CD8-positive, alpha-beta T cell (primary cell): ENCODE measurements at regions of chr12 and their contacts with region 1.

Region 1: DNA sequence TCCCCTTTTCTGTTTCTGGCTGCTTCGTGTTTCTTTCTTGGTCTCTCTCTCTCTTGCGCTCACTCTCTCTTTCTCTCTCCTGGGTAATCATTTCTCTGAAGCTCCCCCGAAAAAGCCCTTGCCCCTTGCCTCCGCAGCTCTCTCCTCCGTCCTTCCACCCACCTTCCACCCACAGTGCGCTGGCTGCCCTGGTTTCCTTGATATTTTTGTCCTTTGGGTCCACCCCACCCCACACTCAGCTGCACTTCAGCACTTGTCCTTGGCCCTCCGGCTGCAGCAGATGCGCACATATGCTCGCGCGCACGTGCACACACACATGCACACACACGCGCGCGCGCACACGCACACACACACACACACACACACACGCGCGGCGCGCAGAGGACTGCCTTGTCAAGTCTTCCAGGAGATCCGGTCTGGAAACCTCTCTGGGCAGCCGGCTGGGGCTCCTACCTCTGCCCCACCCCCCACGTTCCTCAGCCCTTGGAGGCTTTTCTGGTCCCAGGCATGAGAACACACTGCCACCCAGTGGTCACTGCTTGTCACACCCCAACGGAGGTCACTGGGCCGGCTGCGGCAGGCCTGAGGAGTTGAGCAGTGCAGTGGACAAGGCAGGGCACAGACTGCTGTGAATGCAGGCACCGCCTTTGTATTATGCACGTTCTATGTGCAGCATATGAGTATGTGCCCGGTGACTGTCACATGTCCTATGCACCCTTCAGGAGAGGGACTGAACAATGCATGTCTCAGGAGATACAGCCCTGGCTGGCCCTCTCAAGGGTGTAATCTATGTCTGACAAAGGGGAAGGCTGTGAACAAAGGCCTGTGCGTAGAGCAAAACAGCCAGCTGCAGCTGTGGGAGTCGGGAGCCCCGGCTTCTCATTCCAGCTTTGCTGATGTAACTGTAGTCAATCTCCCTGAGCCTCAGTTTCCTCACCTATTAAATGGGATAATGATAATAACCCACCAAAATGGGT is 6.5 kb downstream of the LAG3 start:
- DNase-seq: peak; percentile 80 to 92 (median 88)
- ATAC-seq: peak; percentile 72
- H3K4me3 ChIP-seq: peak overlapping the region; percentile 40 to 64
- H3K4me3 Mint-ChIP-seq: peak overlapping the region; percentile 85
- H3K27ac ChIP-seq: peak overlapping the region in 1 of 2 experiments; percentile 8
- H3K27ac Mint-ChIP-seq: peak overlapping the region; percentile 71
- H3K4me1 ChIP-seq: peaks cover 20% of the 10 kb centered on the region
- H3K4me1 Mint-ChIP-seq: peaks cover 27% of the 10 kb centered on the region
- H3K27me3 ChIP-seq: no peaks in the 10 kb centered on the region
- H3K27me3 Mint-ChIP-seq: peaks cover 12% of the 10 kb centered on the region
- CTCF ChIP-seq: peak; percentile 94

Region 2: GRCh38 chr12:6295094-6295811 is 483.6 kb before region 1 on chr12:
- CTCF ChIA-PET with region 1: no interaction called
- POLR2A ChIA-PET with region 1: no interaction called
- intact Hi-C with region 1: no loop called
- DNase-seq: no peak
- ATAC-seq: no peak
- H3K4me3 ChIP-seq: no peak overlapping the region
- H3K4me3 Mint-ChIP-seq: no peak overlapping the region
- H3K27ac ChIP-seq: no peak overlapping the region
- H3K27ac Mint-ChIP-seq: no peak overlapping the region
- H3K4me1 ChIP-seq: no peaks in the 10 kb centered on the region
- H3K4me1 Mint-ChIP-seq: no peaks in the 10 kb centered on the region
- H3K27me3 ChIP-seq: no peaks in the 10 kb centered on the region
- H3K27me3 Mint-ChIP-seq: peaks cover 16% of the 10 kb centered on the region
- CTCF ChIP-seq: no peak

Region 3: GRCh38 chr12:6554168-6555017 is 224.5 kb before region 1 on chr12:
- CTCF ChIA-PET with region 1: interaction called, 4 read pairs
- POLR2A ChIA-PET with region 1: no interaction called
- intact Hi-C with region 1: loop called in 1 of 2 experiments (anchors 1 kb)
- DNase-seq: peak; percentile 55 to 81 (median 71)
- ATAC-seq: peak; percentile 61
- H3K4me3 ChIP-seq: peak overlapping the region; percentile 70 to 96
- H3K4me3 Mint-ChIP-seq: peak overlapping the region; percentile 87
- H3K27ac ChIP-seq: no peak overlapping the region
- H3K27ac Mint-ChIP-seq: peak overlapping the region; percentile 58
- H3K4me1 ChIP-seq: peaks cover 35% of the 10 kb centered on the region
- H3K4me1 Mint-ChIP-seq: peaks cover 49% of the 10 kb centered on the region
- H3K27me3 ChIP-seq: no peaks in the 10 kb centered on the region
- H3K27me3 Mint-ChIP-seq: no peaks in the 10 kb centered on the region
- CTCF ChIP-seq: peak; percentile 50

Region 4: GRCh38 chr12:6613776-6614512 is 164.9 kb before region 1 on chr12:
- CTCF ChIA-PET with region 1: interaction called, 4 read pairs
- POLR2A ChIA-PET with region 1: no interaction called
- intact Hi-C with region 1: loop called (anchors 1 to 2 kb)
- DNase-seq: peak in 7 of 9 experiments; percentile 36 to 90 (median 67)
- ATAC-seq: peak; percentile 43
- H3K4me3 ChIP-seq: no peak overlapping the region
- H3K4me3 Mint-ChIP-seq: no peak overlapping the region
- H3K27ac ChIP-seq: peak overlapping the region in 1 of 2 experiments; percentile 77
- H3K27ac Mint-ChIP-seq: peak overlapping the region; percentile 90
- H3K4me1 ChIP-seq: peaks cover 37% of the 10 kb centered on the region
- H3K4me1 Mint-ChIP-seq: peaks cover 55% of the 10 kb centered on the region
- H3K27me3 ChIP-seq: no peaks in the 10 kb centered on the region
- H3K27me3 Mint-ChIP-seq: no peaks in the 10 kb centered on the region
- CTCF ChIP-seq: no peak

Region 5: GRCh38 chr12:6723607-6724396 is 55.1 kb before region 1 on chr12 and contains the start of gene COPS7A:
- CTCF ChIA-PET with region 1: interaction called, 4 read pairs
- POLR2A ChIA-PET with region 1: interaction called, 9 read pairs
- intact Hi-C with region 1: loop called in 1 of 2 experiments (anchors 1 kb)
- DNase-seq: peak; percentile 83 to 98 (median 97)
- ATAC-seq: peak; percentile 85
- H3K4me3 ChIP-seq: peak within 1 kb of the TSS; percentile 59 to 68
- H3K4me3 Mint-ChIP-seq: peak within 1 kb of the TSS; percentile 83
- H3K27ac ChIP-seq: peak within 1 kb of the TSS; percentile 67 to 92
- H3K27ac Mint-ChIP-seq: peak within 1 kb of the TSS; percentile 94
- H3K4me1 ChIP-seq: peaks cover 19% of the 10 kb centered on the region
- H3K4me1 Mint-ChIP-seq: peaks cover 27% of the 10 kb centered on the region
- H3K27me3 ChIP-seq: no peaks in the 10 kb centered on the region
- H3K27me3 Mint-ChIP-seq: no peaks in the 10 kb centered on the region
- CTCF ChIP-seq: peak; percentile 28
- total RNA-seq, gene COPS7A: 11.0 to 11.1 TPM

Region 6: DNA sequence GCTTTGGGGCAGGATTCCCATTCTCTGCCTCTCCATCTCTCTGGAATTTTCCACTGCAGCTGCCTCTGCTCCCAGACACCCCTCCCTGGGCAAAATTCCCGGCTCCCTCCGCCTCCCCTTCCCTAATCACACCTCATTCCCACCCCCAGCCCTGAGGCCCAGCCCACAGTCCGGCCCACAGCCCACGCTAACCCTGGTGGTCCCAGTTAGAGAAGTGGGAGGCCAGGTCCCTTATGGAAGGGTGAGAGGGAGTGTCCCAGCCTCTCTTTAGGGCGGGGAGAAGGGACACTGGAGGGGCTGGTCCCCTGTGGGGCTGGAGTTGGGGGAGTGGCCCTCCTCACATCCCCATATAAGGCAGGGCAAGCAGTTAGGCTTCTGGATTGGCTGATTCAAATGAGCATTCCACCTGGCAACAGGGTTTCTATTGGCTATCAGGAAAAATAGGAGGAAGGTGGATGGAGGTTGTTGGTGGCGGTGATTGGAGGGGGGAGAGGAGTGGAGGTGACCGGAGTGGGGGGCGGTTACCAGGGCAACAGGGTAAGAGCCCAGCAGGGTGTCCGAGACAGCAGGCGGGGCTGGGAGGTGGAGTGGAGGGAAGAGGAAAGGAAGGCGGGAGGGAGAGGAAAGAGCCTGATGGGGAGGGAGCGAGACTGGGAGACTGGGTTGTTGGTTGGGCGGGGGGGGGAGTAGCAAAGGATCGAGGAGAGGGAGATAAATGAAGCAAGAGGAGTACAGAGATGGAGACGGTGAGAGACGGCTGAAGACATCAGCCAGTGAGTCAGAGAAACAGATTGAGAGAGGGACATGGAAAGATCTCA is 14.6 kb before region 1 on chr12:
- CTCF ChIA-PET with region 1: interaction called, 403 read pairs
- POLR2A ChIA-PET with region 1: interaction called, 4 read pairs
- intact Hi-C with region 1: no loop called
- DNase-seq: peak in 6 of 9 experiments; percentile 17 to 86 (median 54)
- ATAC-seq: peak; percentile 84
- H3K4me3 ChIP-seq: no peak overlapping the region
- H3K4me3 Mint-ChIP-seq: peak overlapping the region; percentile 13
- H3K27ac ChIP-seq: no peak overlapping the region
- H3K27ac Mint-ChIP-seq: no peak overlapping the region
- H3K4me1 ChIP-seq: peaks cover 22% of the 10 kb centered on the region
- H3K4me1 Mint-ChIP-seq: peaks cover 31% of the 10 kb centered on the region
- H3K27me3 ChIP-seq: peaks cover 7 to 13% of the 10 kb centered on the region in 2 experiments
- H3K27me3 Mint-ChIP-seq: peaks cover 38% of the 10 kb centered on the region
- CTCF ChIP-seq: no peak

Region 7: GRCh38 chr12:6825398-6826124 is 46.7 kb after region 1 on chr12:
- CTCF ChIA-PET with region 1: interaction called, 7 read pairs
- POLR2A ChIA-PET with region 1: interaction called, 3 read pairs
- intact Hi-C with region 1: loop called in 1 of 2 experiments (anchors 2 kb)
- DNase-seq: peak; percentile 59 to 86 (median 79)
- ATAC-seq: peak; percentile 63
- H3K4me3 ChIP-seq: no peak overlapping the region
- H3K4me3 Mint-ChIP-seq: peak overlapping the region; percentile 5
- H3K27ac ChIP-seq: no peak overlapping the region
- H3K27ac Mint-ChIP-seq: no peak overlapping the region
- H3K4me1 ChIP-seq: peaks cover 13% of the 10 kb centered on the region
- H3K4me1 Mint-ChIP-seq: peaks cover 32% of the 10 kb centered on the region
- H3K27me3 ChIP-seq: peaks cover 10 to 45% of the 10 kb centered on the region in 2 experiments
- H3K27me3 Mint-ChIP-seq: peaks cover 48% of the 10 kb centered on the region
- CTCF ChIP-seq: peak; percentile 71